ENCODE measurements at regions of chr15 and their contacts with region 1.

Region 1: DNA sequence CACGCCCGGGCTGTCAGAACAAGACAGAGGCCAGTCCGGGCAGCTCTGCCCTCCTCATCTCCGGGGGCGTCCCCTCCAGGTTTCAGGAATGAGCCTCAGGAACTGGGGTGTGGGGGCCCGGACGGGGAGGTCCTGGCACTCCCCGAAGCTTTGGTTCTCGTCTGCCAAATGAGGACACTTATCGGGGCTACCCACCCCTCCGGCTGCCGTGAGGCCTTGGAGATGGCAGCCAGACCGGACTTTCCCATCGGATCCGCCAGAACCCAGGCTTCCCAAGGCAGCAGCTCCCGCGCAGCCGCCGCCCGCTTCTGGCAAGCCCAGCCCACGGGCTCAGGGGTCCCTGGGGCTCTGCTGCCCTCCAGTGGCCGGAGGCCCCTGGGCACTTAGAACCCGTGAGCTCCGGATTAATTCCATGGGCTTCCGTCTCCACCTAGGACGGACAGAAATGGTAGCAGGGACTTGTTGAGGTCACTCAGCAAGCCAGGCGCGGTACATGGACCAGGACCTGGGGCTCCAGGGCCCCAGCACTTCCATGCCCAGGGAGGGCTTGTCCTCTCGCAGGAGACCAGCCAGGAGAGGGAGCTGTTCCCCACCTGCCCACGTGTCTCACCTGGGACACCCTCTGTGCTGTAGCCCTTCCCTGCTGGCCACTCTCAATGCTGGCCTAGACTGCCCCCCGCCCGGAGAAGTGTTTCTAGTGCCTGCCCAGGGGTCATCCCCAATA is 89.4 kb downstream of the LINGO1 start:
- DNase-seq: peak; percentile 84
- ATAC-seq: peak; percentile 94
- H3K4me3 Mint-ChIP-seq: peak overlapping the region; percentile 74
- H3K27ac Mint-ChIP-seq: peak overlapping the region; percentile 69
- H3K4me1 Mint-ChIP-seq: peaks cover 7% of the 10 kb centered on the region
- H3K27me3 Mint-ChIP-seq: peaks cover 3% of the 10 kb centered on the region
- CTCF ChIP-seq: peak; percentile 98

Region 2: GRCh38 chr15:77107531-77108355 is 435.6 kb before region 1 on chr15:
- CTCF ChIA-PET with region 1: interaction called, 45 read pairs
- POLR2A ChIA-PET with region 1: no interaction called
- intact Hi-C with region 1: loop called (anchors 5 kb)
- DNase-seq: peak; percentile 65
- ATAC-seq: peak; percentile 65
- H3K4me3 Mint-ChIP-seq: no peak overlapping the region
- H3K27ac Mint-ChIP-seq: no peak overlapping the region
- H3K4me1 Mint-ChIP-seq: no peaks in the 10 kb centered on the region
- H3K27me3 Mint-ChIP-seq: no peaks in the 10 kb centered on the region
- CTCF ChIP-seq: peak; percentile 65

Region 3: DNA sequence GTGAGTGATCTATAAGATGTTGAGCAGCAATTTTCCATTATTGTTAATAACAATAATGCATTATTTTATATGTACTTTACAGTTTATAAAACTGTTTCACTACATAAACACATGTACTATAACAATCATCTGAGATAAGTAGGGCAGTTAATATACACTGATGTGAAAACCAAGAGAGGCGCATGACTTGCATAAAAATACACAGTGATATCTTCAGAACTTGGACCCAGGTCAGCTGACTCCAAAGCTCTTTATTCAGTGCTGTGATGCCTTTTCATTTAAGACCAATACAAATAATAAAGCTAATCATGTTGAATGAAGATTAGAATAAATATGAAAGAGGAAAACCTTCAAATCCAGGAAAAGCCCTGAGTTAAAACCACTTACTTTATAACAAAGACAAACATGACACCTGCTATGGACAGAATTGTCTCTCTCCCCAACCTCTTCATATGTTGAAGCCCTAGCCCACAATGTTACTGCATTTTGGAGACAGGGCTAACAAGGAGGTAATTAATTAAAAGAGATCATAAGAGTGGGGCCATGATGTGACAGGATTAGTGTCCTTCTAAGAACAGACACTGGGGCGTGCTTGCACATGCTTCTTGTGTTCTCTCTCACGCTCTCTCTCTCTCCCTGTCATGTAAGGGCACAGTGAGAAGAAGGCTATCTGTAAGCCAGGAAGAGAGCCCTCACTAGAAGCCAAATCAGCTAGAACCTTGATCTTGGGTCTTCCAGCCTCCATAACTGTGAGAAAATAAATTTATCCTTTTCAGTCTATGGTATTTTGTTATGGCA is 416.6 kb before region 1 on chr15:
- CTCF ChIA-PET with region 1: interaction called, 78 read pairs
- POLR2A ChIA-PET with region 1: no interaction called
- intact Hi-C with region 1: no loop called
- DNase-seq: no peak
- ATAC-seq: no peak
- H3K4me3 Mint-ChIP-seq: no peak overlapping the region
- H3K27ac Mint-ChIP-seq: no peak overlapping the region
- H3K4me1 Mint-ChIP-seq: peaks cover 2% of the 10 kb centered on the region
- H3K27me3 Mint-ChIP-seq: no peaks in the 10 kb centered on the region
- CTCF ChIP-seq: no peak

Region 4: DNA sequence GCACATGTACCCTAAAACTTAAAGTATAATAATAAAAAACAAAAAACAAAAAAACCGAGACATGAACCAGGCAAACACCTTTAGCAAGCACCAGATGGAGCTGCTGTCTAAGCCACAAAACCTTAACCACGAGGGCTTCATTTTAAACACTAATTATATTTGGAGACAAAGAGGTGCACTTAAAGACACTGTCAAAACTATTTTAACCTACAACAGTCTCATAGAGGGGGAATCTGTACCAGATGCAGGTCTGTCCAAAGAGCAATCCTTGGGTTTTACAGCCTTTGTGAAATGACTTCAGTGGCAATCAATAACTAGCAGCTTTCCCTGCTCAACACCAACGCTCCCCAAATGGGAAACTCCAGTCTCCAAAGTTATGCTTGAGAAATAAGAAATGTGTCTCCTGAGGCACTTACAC is 356.7 kb before region 1 on chr15:
- CTCF ChIA-PET with region 1: interaction called, 27 read pairs
- POLR2A ChIA-PET with region 1: no interaction called
- intact Hi-C with region 1: loop called (anchors 5 kb)
- DNase-seq: peak; percentile 33
- ATAC-seq: peak; percentile 29
- H3K4me3 Mint-ChIP-seq: no peak overlapping the region
- H3K27ac Mint-ChIP-seq: peak overlapping the region; percentile 79
- H3K4me1 Mint-ChIP-seq: peaks cover 62% of the 10 kb centered on the region
- H3K27me3 Mint-ChIP-seq: no peaks in the 10 kb centered on the region
- CTCF ChIP-seq: peak; percentile 70

Region 5: GRCh38 chr15:77496710-77497103 is 46.6 kb before region 1 on chr15:
- CTCF ChIA-PET with region 1: interaction called, 30 read pairs
- POLR2A ChIA-PET with region 1: no interaction called
- intact Hi-C with region 1: no loop called
- DNase-seq: peak; percentile 84
- ATAC-seq: peak; percentile 78
- H3K4me3 Mint-ChIP-seq: no peak overlapping the region
- H3K27ac Mint-ChIP-seq: no peak overlapping the region
- H3K4me1 Mint-ChIP-seq: peaks cover 21% of the 10 kb centered on the region
- H3K27me3 Mint-ChIP-seq: no peaks in the 10 kb centered on the region
- CTCF ChIP-seq: peak; percentile 93

Measured in activated CD8-positive, alpha-beta T cell treated with anti-CD3 and anti-CD28 coated beads for 36 hours (primary cell).